Aorta (tissue), 5 donors: ENCODE measurements at regions of chr18 and their contacts with region 1.

Region 1: DNA sequence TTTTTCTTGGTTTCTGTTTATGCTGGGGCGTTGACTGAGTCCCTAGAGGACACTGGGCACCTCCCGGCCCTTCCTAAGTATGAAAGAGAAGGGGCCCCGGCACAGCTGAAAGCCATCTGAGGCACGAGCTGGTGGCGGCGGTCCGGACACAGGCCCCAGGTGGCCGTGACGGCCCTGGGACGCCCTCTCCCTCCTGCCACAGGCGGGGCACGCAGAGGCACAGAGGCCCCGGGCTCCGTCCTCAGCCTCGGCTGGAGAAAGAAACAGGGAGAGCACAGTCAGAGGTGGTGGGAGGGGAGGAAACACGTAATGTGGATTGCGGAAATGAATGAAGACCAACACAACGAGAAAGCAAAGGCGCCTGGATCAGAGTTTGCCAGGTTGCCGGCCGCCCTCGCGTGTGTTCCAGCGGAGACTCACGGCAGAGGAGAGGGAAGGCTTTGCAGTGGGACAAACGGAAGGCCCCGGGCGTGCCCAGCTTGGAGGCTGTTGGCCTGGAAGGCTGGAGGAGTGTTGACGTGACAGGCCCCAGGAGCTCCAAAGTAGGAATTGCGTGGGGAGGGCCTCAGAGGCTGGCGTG is 119.1 kb downstream of the PTGR3 start:
- DNase-seq: no peak
- ATAC-seq: no peak
- H3K4me3 ChIP-seq: no peak overlapping the region
- H3K27ac ChIP-seq: no peak overlapping the region
- H3K4me1 ChIP-seq: no peaks in the 10 kb centered on the region
- H3K27me3 ChIP-seq: no peaks in the 10 kb centered on the region

Region 2: DNA sequence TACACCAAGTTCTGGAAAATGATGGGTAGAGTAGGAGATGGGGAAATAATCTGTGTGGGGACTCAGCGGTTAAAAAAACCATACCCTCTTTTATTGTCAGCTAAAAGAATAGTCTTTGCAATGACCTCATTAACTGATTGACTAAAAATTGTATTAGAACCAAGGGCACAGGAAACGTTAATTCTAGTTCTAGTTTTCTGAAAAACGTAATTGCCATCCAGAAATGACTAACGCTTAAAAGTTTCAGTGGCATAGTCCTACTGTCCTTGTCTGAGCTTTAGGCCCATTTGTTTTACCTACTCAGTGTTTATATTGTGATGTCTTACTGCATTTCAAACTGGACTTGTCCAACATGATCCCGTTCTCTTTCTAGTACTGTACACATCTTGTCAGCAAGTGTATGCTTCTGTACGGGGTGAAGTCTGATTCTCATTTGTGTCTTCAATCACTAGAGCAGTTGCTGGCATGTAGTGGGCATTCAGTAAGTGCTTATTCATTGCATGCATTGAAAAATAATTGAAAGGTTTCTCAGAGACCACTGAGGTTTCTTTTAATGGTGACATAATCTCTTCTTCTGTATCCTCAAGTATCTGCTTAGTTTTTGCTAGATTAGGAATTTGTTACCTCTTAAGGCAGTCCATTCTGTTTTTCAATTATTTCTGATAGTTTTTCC is 410.7 kb before region 1 on chr18:
- intact Hi-C with region 1: no loop called
- DNase-seq: no peak
- ATAC-seq: no peak
- H3K4me3 ChIP-seq: no peak overlapping the region
- H3K27ac ChIP-seq: no peak overlapping the region
- H3K4me1 ChIP-seq: no peaks in the 10 kb centered on the region
- H3K27me3 ChIP-seq: no peaks in the 10 kb centered on the region

Region 3: GRCh38 chr18:74773171-74773624 is 316.6 kb before region 1 on chr18:
- intact Hi-C with region 1: no loop called
- DNase-seq: no peak
- ATAC-seq: no peak
- H3K4me3 ChIP-seq: no peak overlapping the region
- H3K27ac ChIP-seq: no peak overlapping the region
- H3K4me1 ChIP-seq: no peaks in the 10 kb centered on the region
- H3K27me3 ChIP-seq: no peaks in the 10 kb centered on the region

Region 4: DNA sequence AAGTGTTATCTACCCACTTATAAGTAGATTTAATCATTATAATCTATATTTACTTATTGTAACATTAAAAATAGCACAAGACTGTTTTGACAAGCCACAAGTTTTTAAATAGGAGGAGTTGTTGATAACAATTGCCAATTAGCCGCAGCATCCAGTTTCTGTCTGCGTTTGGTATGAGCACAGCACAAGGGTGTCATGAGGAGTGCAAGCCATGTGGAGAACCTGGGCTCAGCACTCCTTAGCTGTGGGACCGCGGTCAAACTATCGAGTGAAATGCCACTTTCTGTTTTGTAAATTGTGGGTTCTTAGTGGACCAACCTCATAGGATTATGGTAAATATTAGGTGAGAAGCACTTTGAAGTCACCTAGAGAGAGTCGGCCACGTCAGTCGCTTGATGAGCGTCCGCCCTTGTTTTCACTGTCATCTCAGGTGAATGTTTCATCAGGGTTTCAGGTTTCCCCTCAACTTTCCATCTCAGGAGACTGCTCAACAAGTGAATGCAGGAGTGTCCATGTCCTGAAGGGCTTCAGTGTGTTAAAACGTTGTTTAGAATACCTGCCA is 197.7 kb before region 1 on chr18:
- intact Hi-C with region 1: loop called in 1 of 2 experiments (anchors 5 kb)
- DNase-seq: no peak
- ATAC-seq: no peak
- H3K4me3 ChIP-seq: no peak overlapping the region
- H3K27ac ChIP-seq: no peak overlapping the region
- H3K4me1 ChIP-seq: no peaks in the 10 kb centered on the region
- H3K27me3 ChIP-seq: no peaks in the 10 kb centered on the region

Region 5: DNA sequence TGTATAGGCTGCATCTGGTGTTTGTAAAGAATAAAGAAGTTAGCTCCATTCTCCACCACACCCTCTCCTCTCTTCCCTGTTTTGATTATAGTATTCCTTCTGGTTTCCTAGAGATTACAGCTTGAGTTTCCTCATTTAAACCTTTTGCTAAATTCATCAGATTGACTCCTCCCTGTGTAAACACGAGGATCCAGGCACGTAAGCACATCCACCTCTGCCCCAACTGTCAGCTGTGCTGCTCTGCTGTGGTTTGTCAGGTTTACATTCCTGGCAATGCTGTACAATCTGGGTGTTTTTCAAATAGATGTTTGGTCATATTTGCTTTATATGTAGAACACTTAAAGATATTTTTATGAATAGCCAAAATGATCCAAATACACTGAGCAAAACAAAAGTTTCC is 183.7 kb before region 1 on chr18:
- intact Hi-C with region 1: no loop called
- DNase-seq: no peak
- ATAC-seq: no peak
- H3K4me3 ChIP-seq: no peak overlapping the region
- H3K27ac ChIP-seq: no peak overlapping the region
- H3K4me1 ChIP-seq: no peaks in the 10 kb centered on the region
- H3K27me3 ChIP-seq: no peaks in the 10 kb centered on the region

Region 6: GRCh38 chr18:74994502-74995419 is 95.1 kb before region 1 on chr18:
- intact Hi-C with region 1: no loop called
- DNase-seq: peak in 1 of 2 donors; percentile 57
- ATAC-seq: peak; percentile 46
- H3K4me3 ChIP-seq: no peak overlapping the region
- H3K27ac ChIP-seq: no peak overlapping the region
- H3K4me1 ChIP-seq: no peaks in the 10 kb centered on the region
- H3K27me3 ChIP-seq: no peaks in the 10 kb centered on the region